ENCODE measurements at regions of chr15 and their contacts with region 1.

Region 1: GRCh38 chr15:38354315-38354929 is 99.5 kb upstream of the FAM98B start:
- DNase-seq: peak; percentile 43 to 72 (median 44)
- ATAC-seq: peak; percentile 43 to 69
- H3K4me3 ChIP-seq: no peak overlapping the region
- H3K27ac ChIP-seq: no peak overlapping the region
- H3K4me1 ChIP-seq: no peaks in the 10 kb centered on the region
- H3K27me3 ChIP-seq: no peaks in the 10 kb centered on the region

Region 2: DNA sequence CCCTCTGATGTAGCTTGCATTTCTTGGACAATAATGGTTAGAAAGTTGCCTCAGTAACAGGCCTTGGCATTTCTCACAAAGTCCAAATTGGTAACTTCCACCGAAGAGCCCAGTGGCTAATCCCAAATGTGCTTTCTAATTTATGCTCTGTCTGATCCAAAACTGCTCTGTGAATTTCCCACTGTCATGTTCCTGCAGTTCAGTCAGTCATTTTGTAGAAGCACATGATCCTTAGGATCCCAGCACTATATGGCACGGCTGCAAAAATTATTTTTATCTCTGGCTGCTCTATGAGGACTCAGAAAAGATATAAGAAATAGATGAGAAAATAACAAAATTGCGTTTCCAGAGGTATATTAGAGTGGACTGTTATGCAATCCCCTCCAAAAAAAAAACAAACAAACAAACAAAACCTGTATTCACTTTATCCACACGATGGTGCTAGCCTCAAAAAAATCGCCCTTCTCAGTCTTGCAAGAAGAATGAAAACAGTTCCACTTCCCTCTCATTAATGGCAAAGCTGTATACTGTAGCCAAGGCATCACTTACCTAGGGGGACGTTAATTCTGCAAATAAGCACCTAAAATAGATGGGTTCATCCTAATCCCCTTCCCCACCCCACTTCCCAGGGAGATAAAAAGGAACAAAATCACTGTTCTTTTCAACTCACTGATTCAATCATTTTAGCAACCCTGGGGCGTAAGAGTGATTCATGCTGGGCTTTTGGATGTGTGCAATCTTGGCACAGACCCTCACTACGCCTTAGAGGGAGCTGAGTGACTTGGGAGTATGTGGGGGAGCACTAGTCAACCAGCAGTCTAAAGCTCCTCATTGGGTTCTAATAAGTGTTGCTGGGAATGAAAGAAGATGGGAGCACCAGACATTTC is 358.7 kb before region 1 on chr15:
- intact Hi-C with region 1: loop called (anchors 2 to 10 kb)
- DNase-seq: peak in 1 of 3 donors; percentile 35
- ATAC-seq: peak; percentile 81 to 85
- H3K4me3 ChIP-seq: no peak overlapping the region
- H3K27ac ChIP-seq: no peak overlapping the region
- H3K4me1 ChIP-seq: peaks cover 1% of the 10 kb centered on the region
- H3K27me3 ChIP-seq: no peaks in the 10 kb centered on the region

Region 3: GRCh38 chr15:38002883-38003477 is 351.4 kb before region 1 on chr15:
- intact Hi-C with region 1: loop called (anchors 5 to 10 kb)
- DNase-seq: peak; percentile 41 to 82 (median 76)
- ATAC-seq: peak; percentile 78 to 81
- H3K4me3 ChIP-seq: no peak overlapping the region
- H3K27ac ChIP-seq: no peak overlapping the region
- H3K4me1 ChIP-seq: no peaks in the 10 kb centered on the region
- H3K27me3 ChIP-seq: no peaks in the 10 kb centered on the region

Region 4: GRCh38 chr15:38084289-38084688 is 270.1 kb before region 1 on chr15:
- intact Hi-C with region 1: loop called in 1 of 4 experiments (anchors 10 kb)
- DNase-seq: no peak
- ATAC-seq: peak in 1 of 2 donors; percentile 31
- H3K4me3 ChIP-seq: no peak overlapping the region
- H3K27ac ChIP-seq: no peak overlapping the region
- H3K4me1 ChIP-seq: peaks cover 3% of the 10 kb centered on the region
- H3K27me3 ChIP-seq: no peaks in the 10 kb centered on the region

Region 5: GRCh38 chr15:38406436-38406835 is 52.0 kb after region 1 on chr15:
- intact Hi-C with region 1: loop called in 1 of 4 experiments (anchors 10 kb)
- DNase-seq: no peak
- ATAC-seq: no peak
- H3K4me3 ChIP-seq: no peak overlapping the region
- H3K27ac ChIP-seq: no peak overlapping the region
- H3K4me1 ChIP-seq: no peaks in the 10 kb centered on the region
- H3K27me3 ChIP-seq: no peaks in the 10 kb centered on the region

Region 6: DNA sequence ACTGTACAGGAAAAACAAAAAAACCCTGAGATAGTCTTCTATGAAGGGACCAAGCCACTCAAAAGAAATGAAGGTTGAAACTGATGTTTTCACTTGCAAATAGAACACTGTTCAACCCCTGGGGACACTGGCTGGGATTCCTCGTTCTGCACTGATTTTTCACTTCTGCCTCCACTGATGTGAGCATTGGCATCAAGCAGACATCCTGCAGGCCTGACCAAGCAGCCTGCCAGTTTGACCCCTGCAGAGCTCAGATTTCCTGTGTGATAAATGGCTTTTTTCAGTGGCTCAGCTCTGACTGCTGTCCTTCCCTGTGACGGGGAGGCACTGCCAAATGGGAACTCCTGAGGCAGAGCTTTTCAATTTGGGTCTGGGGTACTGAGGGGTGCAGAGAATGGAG is 160.2 kb after region 1 on chr15:
- intact Hi-C with region 1: no loop called
- DNase-seq: no peak
- ATAC-seq: no peak
- H3K4me3 ChIP-seq: no peak overlapping the region
- H3K27ac ChIP-seq: no peak overlapping the region
- H3K4me1 ChIP-seq: no peaks in the 10 kb centered on the region
- H3K27me3 ChIP-seq: no peaks in the 10 kb centered on the region